Activated T-helper 1 cell treated with anti-CD3 and anti-CD28 coated beads, Interleukin-12 subunit alpha, Interleukin-12 subunit beta, Interleukin-2, Interleukin-4 antibody, amounts not matched to agents 30 ng/mL and 10 ng/mL and 1 ng/mL, durations not matched to agents 14 hours and 24 hours and 36 hours (primary cell): ENCODE measurements at regions of chr11 and their contacts with region 1.

Region 1: DNA sequence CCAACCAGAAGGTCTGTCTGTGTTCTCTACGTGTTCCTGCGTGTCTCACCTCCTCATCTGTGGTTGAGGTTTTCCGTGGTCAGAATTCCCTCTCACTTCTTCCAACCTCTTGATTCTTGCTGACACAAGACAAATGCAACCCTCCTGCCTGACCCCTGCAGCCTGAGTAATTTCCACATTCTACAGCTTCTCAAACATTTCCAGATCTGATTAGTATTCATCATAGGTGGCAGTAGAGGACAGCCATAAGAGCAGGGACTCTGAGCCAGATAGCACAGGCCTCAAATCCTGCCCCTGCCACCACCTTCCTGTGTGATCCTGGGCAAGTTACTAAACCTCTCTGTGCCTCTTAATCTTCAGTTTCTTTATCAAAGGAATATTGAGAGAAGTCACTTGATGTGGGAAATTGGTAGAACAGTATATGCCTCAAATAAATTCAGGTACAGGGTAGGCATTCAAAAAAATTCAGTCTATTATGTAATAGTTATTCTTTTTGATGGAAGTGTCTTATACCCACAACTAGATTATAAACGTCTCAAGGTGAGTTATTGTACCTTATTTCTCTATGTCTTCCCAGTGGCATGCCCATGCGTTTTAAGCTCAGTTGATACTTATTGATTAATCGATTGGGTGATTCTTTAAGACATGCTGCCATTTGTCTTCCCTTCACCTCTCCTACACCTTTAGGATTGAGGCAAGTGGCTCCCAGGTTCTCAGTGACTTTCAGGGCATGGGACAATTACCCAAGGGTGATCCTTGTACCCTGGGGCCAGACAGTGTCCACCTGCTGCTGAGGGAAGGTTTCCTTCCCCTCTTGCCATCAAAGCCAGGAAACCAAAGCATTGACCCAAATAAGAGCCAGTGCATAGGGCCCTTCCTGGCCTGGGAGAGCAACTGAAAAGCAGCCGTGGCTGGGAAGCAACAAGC is 19.6 kb downstream of the POU2AF1 start:
- DNase-seq: no peak
- H3K4me3 Mint-ChIP-seq: no peak overlapping the region
- H3K27ac Mint-ChIP-seq: no peak overlapping the region
- H3K4me1 Mint-ChIP-seq: peaks cover 25% of the 10 kb centered on the region
- H3K27me3 Mint-ChIP-seq: no peaks in the 10 kb centered on the region

Region 2: GRCh38 chr11:111283945-111284481 is 75.5 kb before region 1 on chr11:
- intact Hi-C with region 1: loop called (anchors 5 kb)
- DNase-seq: no peak
- H3K4me3 Mint-ChIP-seq: no peak overlapping the region
- H3K27ac Mint-ChIP-seq: no peak overlapping the region
- H3K4me1 Mint-ChIP-seq: no peaks in the 10 kb centered on the region
- H3K27me3 Mint-ChIP-seq: peaks cover 4% of the 10 kb centered on the region

Region 3: GRCh38 chr11:111303461-111303860 is 56.0 kb before region 1 on chr11:
- intact Hi-C with region 1: no loop called
- DNase-seq: no peak
- H3K4me3 Mint-ChIP-seq: no peak overlapping the region
- H3K27ac Mint-ChIP-seq: no peak overlapping the region
- H3K4me1 Mint-ChIP-seq: no peaks in the 10 kb centered on the region
- H3K27me3 Mint-ChIP-seq: peaks cover 57% of the 10 kb centered on the region

Region 4: DNA sequence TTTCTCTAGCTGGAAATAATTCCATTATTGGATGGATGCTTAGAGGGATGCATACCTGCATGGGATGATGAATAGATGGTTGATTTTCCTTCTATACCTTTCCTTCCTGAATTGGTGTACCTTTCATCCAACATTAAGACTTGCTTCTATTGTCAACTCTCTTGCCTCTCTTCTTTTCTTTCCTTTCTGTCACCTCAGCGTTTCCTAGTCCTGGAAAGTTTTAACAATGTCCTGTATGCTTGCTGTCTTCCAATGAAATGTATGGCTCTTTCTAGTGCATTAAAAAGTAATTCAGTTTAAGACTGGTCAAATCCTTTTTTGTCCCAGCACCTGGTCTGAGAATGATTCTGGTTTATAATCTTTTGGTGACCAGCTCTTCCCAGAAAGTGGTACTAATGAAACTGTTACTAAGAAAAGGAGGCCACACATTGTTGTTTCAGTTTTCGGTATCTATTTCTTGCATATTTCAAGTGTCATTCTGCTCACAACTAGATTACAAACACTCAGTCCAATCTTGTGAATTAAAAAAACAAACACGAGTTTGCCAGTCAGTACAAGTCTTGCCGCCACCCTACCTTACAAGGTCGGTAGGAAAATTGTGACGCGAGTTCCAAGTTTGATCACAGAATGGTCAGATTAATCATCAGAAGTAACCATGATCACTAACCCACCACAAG is 11.6 kb after region 1 on chr11:
- intact Hi-C with region 1: loop called (anchors 1 kb)
- DNase-seq: no peak
- H3K4me3 Mint-ChIP-seq: peak overlapping the region; percentile 51
- H3K27ac Mint-ChIP-seq: peak overlapping the region; percentile 91
- H3K4me1 Mint-ChIP-seq: peaks cover 77% of the 10 kb centered on the region
- H3K27me3 Mint-ChIP-seq: no peaks in the 10 kb centered on the region

Region 5: GRCh38 chr11:111408789-111409727 is 49.6 kb after region 1 on chr11:
- intact Hi-C with region 1: no loop called
- DNase-seq: no peak
- H3K4me3 Mint-ChIP-seq: no peak overlapping the region
- H3K27ac Mint-ChIP-seq: no peak overlapping the region
- H3K4me1 Mint-ChIP-seq: peaks cover 49% of the 10 kb centered on the region
- H3K27me3 Mint-ChIP-seq: no peaks in the 10 kb centered on the region

Region 6: DNA sequence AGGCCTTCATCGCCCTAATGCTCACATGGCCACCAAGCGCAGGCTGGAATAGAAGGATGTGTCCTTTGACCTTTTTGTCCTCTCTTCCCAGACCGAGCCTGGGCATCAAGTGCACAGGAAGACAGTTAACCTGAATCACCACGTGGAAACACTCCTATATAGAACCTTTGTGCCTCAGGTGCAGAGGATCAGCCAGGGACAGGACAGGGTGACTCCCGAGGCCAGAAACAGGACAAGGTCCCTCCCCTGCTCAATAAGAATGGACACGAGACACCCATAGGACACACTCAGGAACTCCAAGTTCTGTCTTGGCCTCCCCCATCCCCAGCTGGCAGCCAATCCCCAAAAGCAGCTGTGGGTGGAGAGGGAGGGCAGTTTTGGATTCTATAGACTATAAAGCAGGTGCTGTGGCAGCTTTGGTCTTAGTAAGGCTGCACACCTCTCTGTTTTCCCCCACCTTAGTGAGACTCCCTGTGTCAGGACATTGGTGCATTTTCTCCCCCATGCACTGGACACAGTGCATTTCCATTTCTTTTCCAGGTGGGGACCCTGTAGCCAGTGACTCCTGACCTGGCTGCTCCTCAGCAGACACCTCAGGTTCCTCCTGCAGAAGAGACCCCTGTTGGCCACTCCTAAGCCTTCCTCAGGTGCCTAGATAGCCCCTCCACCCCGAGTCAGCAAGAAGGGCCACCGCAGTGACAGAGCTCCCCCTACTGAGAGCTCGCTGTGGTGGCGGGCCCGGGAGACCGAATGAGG is 63.2 kb after region 1 on chr11:
- intact Hi-C with region 1: loop called (anchors 1 kb)
- DNase-seq: peak; percentile 21
- H3K4me3 Mint-ChIP-seq: no peak overlapping the region
- H3K27ac Mint-ChIP-seq: peak overlapping the region; percentile 13
- H3K4me1 Mint-ChIP-seq: peaks cover 24% of the 10 kb centered on the region
- H3K27me3 Mint-ChIP-seq: no peaks in the 10 kb centered on the region

Region 7: DNA sequence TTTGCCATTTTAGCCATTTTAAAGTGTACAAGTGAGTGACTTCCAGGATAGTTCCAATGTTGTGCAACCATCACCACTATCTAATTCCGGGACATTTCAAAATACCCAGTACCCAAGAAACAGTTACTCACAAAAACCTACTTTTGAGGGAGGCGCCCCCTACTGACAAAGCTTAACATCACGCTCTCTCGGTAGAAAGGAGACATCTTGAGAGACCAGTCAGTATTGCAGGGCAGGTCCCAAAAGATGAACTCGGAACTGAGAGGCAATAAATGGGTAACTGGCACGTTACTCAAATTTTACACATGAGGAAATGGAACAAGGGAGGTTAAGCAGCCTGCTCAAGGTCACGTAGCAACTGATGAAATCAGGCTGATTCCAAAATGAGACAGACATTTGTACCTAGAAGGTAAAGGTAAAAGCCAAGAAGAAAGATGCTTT is 69.6 kb after region 1 on chr11:
- intact Hi-C with region 1: loop called (anchors 1 kb)
- DNase-seq: peak; percentile 40
- H3K4me3 Mint-ChIP-seq: no peak overlapping the region
- H3K27ac Mint-ChIP-seq: no peak overlapping the region
- H3K4me1 Mint-ChIP-seq: peaks cover 6% of the 10 kb centered on the region
- H3K27me3 Mint-ChIP-seq: peaks cover 6% of the 10 kb centered on the region

Region 8: DNA sequence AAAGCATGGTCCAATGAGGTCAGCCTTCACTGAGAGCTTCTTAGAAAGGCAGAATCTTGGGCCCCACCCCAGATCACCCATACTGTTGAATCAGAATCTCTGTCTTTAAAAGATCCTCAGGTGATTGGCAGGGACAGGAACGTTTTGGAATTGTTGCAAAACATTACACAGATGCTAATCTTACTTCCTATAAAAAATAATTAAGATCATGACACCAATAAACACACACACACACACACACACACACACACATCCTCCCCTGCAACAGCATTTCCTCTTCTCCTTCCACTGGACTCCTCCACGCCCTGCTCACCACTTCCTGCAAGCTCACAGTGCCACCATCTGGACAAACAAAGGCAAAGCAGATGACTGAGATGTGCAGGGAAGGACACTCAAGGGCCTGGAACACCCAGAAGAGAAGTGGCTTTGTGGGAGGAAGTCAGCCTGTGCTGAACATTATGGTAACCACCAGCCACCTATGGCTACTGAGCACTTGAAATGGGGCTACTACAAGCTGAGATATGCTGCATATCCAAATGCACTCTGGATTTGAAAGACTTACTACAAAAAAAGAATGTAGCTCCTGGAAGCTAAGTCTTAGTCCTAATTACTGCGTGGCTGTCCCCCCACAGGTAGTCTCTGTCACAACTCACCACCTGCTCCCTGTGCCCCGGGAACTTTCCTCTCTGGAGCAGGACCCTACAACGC is 87.1 kb after region 1 on chr11:
- intact Hi-C with region 1: loop called (anchors 1 kb)
- DNase-seq: peak; percentile 73
- H3K4me3 Mint-ChIP-seq: no peak overlapping the region
- H3K27ac Mint-ChIP-seq: peak overlapping the region; percentile 46
- H3K4me1 Mint-ChIP-seq: peaks cover 21% of the 10 kb centered on the region
- H3K27me3 Mint-ChIP-seq: peaks cover 3% of the 10 kb centered on the region

Region 9: DNA sequence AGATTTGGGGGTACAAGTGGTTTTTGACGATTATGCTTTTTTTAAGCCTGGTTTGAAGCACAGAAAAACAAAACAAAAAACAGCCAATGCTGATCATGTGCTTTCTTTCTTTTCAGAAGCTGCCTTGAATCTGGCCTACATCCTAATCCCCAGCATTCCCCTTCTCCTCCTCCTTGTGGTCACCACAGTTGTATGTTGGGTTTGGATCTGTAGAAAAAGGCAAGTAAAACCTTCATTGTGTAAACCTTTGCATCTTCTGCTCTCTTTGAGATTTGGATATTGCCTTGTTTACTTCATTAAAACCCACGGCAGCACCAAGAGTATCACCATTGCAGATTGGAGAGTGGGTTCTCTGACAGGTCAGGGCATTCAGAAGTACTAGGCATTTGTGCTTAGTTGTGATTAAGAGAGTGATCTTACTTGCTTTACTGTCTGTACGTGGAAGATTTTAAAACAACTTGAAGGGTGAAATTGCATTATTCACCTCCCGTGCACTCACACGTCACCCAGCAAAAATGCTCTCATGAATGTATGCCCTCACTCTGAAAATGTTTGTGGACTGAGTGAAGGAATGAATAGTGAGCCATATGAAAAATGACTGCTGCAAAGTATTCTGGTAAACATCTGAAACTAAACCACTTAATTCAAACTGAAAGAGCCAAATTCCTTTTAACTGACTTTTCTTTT is 198.1 kb after region 1 on chr11:
- intact Hi-C with region 1: no loop called
- DNase-seq: no peak
- H3K4me3 Mint-ChIP-seq: no peak overlapping the region
- H3K27ac Mint-ChIP-seq: no peak overlapping the region
- H3K4me1 Mint-ChIP-seq: no peaks in the 10 kb centered on the region
- H3K27me3 Mint-ChIP-seq: no peaks in the 10 kb centered on the region